ENCODE measurements at regions of chr3 and their contacts with region 1.

Region 1: DNA sequence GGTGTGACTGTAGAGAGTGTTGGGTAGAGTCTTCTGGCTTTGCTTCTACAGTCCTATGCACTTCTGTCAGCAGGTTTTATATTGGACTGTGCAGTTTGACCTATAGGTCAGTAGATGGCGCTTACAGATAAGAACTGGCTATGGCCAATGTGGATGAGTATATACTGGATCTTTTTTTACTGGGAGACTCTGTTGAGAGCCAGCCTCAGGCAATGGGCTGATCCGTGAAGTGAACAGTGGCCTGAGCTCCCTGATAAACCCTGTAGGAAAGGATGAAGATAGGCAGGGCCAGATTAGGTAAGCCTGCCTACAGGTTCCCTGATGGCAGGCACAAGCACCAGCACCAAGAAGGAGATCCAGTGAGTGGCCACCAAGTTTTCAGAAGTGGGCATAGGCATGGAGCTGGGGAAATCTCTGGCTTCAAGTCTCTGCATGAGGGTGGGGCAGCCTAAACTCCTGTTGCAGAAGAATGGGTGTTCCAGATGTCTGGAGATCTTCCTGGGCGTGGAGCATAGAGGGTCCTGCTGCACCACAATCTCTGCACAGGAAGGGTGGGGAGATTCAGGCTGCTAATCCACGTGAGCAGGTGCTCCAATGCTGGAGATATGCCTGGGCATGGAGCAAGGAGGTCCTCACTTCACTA is 326.0 kb upstream of the SGO1 start:
- DNase-seq: no peak
- H3K4me3 ChIP-seq: no peak overlapping the region
- H3K27ac ChIP-seq: no peak overlapping the region
- H3K4me1 ChIP-seq: no peaks in the 10 kb centered on the region
- H3K27me3 ChIP-seq: no peaks in the 10 kb centered on the region
- CTCF ChIP-seq: peak in 3 of 5 experiments; percentile 22 to 28 (median 23)
- EP300 ChIP-seq: no peak
- POLR2A ChIP-seq: no peak

Region 2: DNA sequence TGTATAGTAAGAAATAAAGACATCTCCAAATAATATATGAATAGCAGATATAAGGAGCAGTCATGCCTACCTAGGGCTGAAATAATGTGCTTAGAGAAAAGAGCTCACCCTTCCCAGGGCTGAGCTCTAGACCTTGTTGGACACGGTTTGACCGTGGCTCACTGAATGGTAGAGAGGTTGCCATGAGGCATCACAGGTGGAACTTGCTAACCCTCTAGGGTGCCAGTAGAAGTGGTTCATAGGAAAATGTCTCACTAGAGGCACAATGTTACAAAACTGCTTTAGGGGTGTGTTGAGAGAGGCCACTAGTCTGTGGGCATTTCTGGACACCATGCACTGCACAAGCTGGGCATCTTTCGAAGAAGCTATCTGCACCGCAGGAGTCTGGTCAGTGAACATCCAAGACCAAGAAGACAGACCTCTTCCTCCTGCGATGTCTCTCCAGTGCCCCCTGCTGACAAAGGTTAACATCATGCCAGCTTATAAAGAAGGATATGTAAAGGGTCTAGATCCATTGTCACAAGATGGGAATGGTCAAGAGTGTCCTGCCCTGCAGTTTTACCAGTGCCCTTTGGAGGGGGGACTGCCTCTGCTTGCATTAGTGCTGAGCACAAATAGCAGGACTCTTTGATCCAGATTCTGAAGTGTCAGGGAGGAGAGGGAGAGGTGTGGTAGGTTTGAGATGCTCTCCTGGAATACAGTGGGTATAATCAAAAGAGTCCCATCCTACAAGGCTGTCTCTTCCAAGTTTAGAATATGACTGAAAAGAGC is 972.3 kb after region 1 on chr3:
- in situ Hi-C with region 1: loop called in 1 of 4 experiments (anchors 25 kb)
- intact Hi-C with region 1: no loop called
- DNase-seq: peak; percentile 8
- H3K4me3 ChIP-seq: no peak overlapping the region
- H3K27ac ChIP-seq: no peak overlapping the region
- H3K4me1 ChIP-seq: no peaks in the 10 kb centered on the region
- H3K27me3 ChIP-seq: no peaks in the 10 kb centered on the region
- CTCF ChIP-seq: peak in 3 of 5 experiments; percentile 22 to 32 (median 23)
- EP300 ChIP-seq: no peak
- POLR2A ChIP-seq: no peak